Left ventricle myocardium inferior (tissue), 1 donor: ENCODE measurements at regions of chr1 and their contacts with region 1.

Region 1: GRCh38 chr1:202599677-202600431 is 110.4 kb downstream of the SYT2 start:
- DNase-seq: peak; percentile 54
- H3K4me3 ChIP-seq: no peak overlapping the region
- H3K27ac ChIP-seq: no peak overlapping the region
- H3K4me1 ChIP-seq: peaks cover 9% of the 10 kb centered on the region
- H3K27me3 ChIP-seq: no peaks in the 10 kb centered on the region
- CTCF ChIP-seq: peak; percentile 83

Region 2: DNA sequence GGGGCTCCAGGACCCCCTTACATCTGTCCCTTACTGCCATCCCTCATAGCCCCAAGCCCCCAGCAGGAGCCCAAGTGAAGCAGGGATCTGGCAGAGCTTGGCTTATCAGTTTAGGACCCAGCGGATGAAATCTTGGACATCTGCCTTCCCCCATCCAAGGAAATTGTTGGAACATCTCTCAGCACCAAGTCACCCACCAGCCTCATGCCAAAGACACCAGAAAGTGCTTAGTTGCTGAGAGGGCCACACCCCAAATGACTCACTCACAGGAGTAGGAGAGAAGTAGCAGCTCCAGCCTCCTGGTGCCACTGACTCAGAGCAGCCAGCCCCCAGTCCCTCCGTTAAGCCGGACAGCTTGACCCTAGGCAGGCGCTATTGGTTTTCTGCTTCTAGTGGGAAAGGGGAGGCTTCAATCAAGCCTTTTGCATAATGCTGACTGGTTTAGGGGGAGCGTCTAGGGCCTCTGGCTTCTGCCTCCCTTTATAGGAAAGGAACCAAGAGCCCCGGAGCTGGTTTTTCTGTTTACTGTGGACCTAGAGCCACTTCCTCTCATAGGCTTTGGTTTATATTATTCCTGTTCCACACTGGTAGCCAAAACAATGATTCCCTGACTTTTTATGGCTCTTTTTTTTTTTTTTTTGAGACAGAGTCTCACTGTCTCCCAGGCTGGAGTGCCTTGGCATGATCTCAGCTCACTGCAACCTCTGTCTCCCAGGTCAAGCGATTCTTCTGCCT is 885.1 kb before region 1 on chr1:
- intact Hi-C with region 1: no loop called
- DNase-seq: peak; percentile 68
- H3K4me3 ChIP-seq: peak overlapping the region; percentile 22
- H3K27ac ChIP-seq: peak overlapping the region; percentile 97
- H3K4me1 ChIP-seq: peaks cover 100% of the 10 kb centered on the region
- H3K27me3 ChIP-seq: no peaks in the 10 kb centered on the region
- CTCF ChIP-seq: no peak

Region 3: DNA sequence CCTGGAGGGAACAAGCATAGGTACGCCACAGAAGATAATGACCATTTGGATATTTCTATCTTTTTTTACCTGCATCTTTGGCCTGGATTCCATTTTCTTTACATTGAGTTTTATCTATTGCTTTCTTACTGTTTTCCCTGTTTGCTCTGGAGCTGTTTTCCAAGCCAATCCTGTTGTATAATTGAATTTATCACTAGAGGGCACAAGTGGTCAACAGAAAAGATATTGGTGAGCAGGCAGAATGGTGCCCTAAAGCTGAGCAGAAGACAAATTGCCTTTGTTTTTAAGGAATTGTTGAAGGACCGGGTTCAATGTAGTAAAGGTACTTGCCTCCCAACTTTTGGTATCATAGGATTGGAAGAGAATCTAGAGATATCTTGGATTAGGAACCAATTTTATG is 98.6 kb before region 1 on chr1:
- intact Hi-C with region 1: loop called (anchors 10 kb)
- DNase-seq: no peak
- H3K4me3 ChIP-seq: no peak overlapping the region
- H3K27ac ChIP-seq: peak overlapping the region; percentile 24
- H3K4me1 ChIP-seq: peaks cover 73% of the 10 kb centered on the region
- H3K27me3 ChIP-seq: no peaks in the 10 kb centered on the region
- CTCF ChIP-seq: peak; percentile 62

Region 4: GRCh38 chr1:202725541-202725940 is 125.7 kb after region 1 on chr1:
- intact Hi-C with region 1: no loop called
- DNase-seq: no peak
- H3K4me3 ChIP-seq: no peak overlapping the region
- H3K27ac ChIP-seq: no peak overlapping the region
- H3K4me1 ChIP-seq: no peaks in the 10 kb centered on the region
- H3K27me3 ChIP-seq: no peaks in the 10 kb centered on the region
- CTCF ChIP-seq: no peak

Region 5: DNA sequence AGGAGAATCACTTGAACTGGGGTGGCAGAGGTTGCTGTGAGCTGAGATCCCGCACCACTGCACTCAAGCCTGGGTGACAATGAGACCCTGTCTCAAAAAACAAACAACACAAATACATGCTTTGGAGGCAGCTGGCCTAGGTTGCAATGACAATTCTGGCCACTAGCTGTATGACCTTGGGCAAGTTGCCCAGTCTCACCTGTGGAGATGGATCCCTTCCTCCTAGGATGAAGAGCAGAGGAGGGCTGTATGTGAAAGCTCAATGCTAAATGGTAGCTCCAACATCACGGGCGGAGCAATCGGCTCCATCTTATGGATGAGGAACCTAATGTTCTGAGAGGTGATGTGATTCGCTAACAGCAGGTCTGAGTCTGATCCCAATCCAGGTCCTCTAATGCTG is 548.3 kb after region 1 on chr1:
- intact Hi-C with region 1: no loop called
- DNase-seq: no peak
- H3K4me3 ChIP-seq: no peak overlapping the region
- H3K27ac ChIP-seq: no peak overlapping the region
- H3K4me1 ChIP-seq: peaks cover 18% of the 10 kb centered on the region
- H3K27me3 ChIP-seq: no peaks in the 10 kb centered on the region
- CTCF ChIP-seq: peak; percentile 32